HCT116 (cell line): ENCODE measurements at regions of chr1 and their contacts with region 1.

Region 1: GRCh38 chr1:66436378-66437145 is 97.4 kb upstream of the SGIP1 start:
- DNase-seq: peak; percentile 63
- ATAC-seq: peak; percentile 88
- H3K4me3 ChIP-seq: no peak overlapping the region
- H3K27ac ChIP-seq: peak overlapping the region; percentile 50
- H3K4me1 ChIP-seq: peaks cover 17 to 46% of the 10 kb centered on the region in 2 experiments
- H3K27me3 ChIP-seq: no peaks in the 10 kb centered on the region
- CTCF ChIP-seq: peak; percentile 51 to 68 (median 63); a peak in 5 of 6 replicates
- POLR2A ChIP-seq: no peak
- RAD21 ChIP-seq: peak; percentile 72

Region 2: GRCh38 chr1:66350001-66350547 is 86.5 kb before region 1 on chr1:
- CTCF ChIA-PET with region 1: no interaction called
- POLR2A ChIA-PET with region 1: interaction called, 4 read pairs
- RAD21 ChIA-PET with region 1: interaction called in 1 of 2 experiments, 5 read pairs
- intact Hi-C with region 1: loop called (anchors 5 kb)
- DNase-seq: peak; percentile 95
- ATAC-seq: peak; percentile 83
- H3K4me3 ChIP-seq: peak overlapping the region in 1 of 2 experiments; percentile 26; a peak in 2 of 4 replicates
- H3K27ac ChIP-seq: peak overlapping the region; percentile 96
- H3K4me1 ChIP-seq: peaks cover 93 to 100% of the 10 kb centered on the region in 2 experiments
- H3K27me3 ChIP-seq: no peaks in the 10 kb centered on the region
- CTCF ChIP-seq: no peak
- POLR2A ChIP-seq: no peak
- RAD21 ChIP-seq: peak; percentile 17

Region 3: GRCh38 chr1:66490816-66491215 is 54.3 kb after region 1 on chr1:
- CTCF ChIA-PET with region 1: no interaction called
- POLR2A ChIA-PET with region 1: no interaction called
- RAD21 ChIA-PET with region 1: no interaction called
- intact Hi-C with region 1: no loop called
- DNase-seq: no peak
- ATAC-seq: no peak
- H3K4me3 ChIP-seq: no peak overlapping the region
- H3K27ac ChIP-seq: no peak overlapping the region
- H3K4me1 ChIP-seq: no peaks in the 10 kb centered on the region
- H3K27me3 ChIP-seq: no peaks in the 10 kb centered on the region
- CTCF ChIP-seq: no peak
- POLR2A ChIP-seq: no peak
- RAD21 ChIP-seq: no peak